Mammary epithelial cell (primary cell): ENCODE measurements at regions of chr16 and their contacts with region 1.

Region 1: DNA sequence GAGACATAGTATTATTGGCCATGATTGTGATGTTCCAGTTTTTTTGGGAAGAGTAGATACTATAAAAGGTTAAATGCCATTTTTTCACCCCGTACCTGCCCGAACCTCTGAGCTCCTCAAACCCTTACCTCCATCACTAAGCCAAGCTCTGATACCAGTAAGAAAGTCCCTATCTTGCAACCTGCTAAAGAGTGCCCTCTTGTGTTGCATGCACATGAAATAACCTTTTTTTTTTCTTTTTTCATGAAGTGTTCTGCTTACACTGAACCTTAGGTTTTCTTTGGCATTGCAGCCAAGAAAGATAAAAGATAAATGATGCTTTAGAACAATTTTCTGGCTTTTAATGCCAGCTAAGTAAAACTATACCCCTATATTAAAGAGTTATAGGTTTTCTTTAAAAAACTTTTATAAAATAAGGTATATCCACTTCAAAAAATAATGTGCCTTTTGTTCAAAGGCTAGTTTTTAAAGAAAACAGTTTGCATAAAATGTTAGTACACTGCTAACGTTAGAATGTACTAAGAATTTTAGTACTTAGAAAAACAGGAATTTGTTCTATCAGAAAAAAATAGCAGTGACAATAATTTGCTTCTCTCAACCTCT is 295.3 kb upstream of the PMFBP1 start:
- DNase-seq: peak; percentile 41
- H3K4me3 ChIP-seq: no peak overlapping the region
- H3K27ac ChIP-seq: no peak overlapping the region
- H3K4me1 ChIP-seq: no peaks in the 10 kb centered on the region
- H3K27me3 ChIP-seq: no peaks in the 10 kb centered on the region
- CTCF ChIP-seq: peak; percentile 68 to 81

Region 2: GRCh38 chr16:72234387-72234786 is 232.9 kb before region 1 on chr16:
- CTCF ChIA-PET with region 1: no interaction called
- dilution Hi-C with region 1: no loop called
- in situ Hi-C with region 1: loop called in 1 of 2 experiments (anchors 5 kb)
- intact Hi-C with region 1: no loop called
- DNase-seq: no peak
- H3K4me3 ChIP-seq: no peak overlapping the region
- H3K27ac ChIP-seq: no peak overlapping the region
- H3K4me1 ChIP-seq: peaks cover 5% of the 10 kb centered on the region
- H3K27me3 ChIP-seq: no peaks in the 10 kb centered on the region
- CTCF ChIP-seq: no peak

Region 3: DNA sequence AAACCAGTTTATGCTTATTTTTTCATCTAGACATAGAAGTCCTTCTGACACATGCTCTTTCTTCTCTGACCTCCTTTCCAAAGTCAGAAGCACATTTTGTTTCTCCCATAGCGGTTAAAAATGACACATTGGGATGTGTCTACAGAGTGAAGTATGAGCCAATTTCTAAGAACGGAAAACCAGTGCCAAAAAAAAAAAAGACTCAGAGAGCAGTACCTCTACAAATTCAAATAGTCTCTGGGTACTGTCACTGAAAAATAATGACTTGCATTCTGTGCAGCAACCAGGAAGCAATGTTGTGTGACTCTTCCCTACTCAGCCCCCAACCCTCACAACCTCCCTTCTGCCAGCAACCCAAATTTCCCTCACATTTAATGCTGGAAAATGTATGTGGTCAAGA is 149.8 kb before region 1 on chr16:
- CTCF ChIA-PET with region 1: no interaction called
- dilution Hi-C with region 1: no loop called
- in situ Hi-C with region 1: no loop called
- intact Hi-C with region 1: no loop called
- DNase-seq: no peak
- H3K4me3 ChIP-seq: no peak overlapping the region
- H3K27ac ChIP-seq: no peak overlapping the region
- H3K4me1 ChIP-seq: no peaks in the 10 kb centered on the region
- H3K27me3 ChIP-seq: no peaks in the 10 kb centered on the region
- CTCF ChIP-seq: no peak

Region 4: GRCh38 chr16:72400257-72400882 is 66.9 kb before region 1 on chr16:
- CTCF ChIA-PET with region 1: interaction called, 5 read pairs
- dilution Hi-C with region 1: no loop called
- in situ Hi-C with region 1: no loop called
- intact Hi-C with region 1: loop called (anchors 2 kb)
- DNase-seq: peak; percentile 28
- H3K4me3 ChIP-seq: no peak overlapping the region
- H3K27ac ChIP-seq: no peak overlapping the region
- H3K4me1 ChIP-seq: no peaks in the 10 kb centered on the region
- H3K27me3 ChIP-seq: no peaks in the 10 kb centered on the region
- CTCF ChIP-seq: peak; percentile 68 to 74

Region 5: DNA sequence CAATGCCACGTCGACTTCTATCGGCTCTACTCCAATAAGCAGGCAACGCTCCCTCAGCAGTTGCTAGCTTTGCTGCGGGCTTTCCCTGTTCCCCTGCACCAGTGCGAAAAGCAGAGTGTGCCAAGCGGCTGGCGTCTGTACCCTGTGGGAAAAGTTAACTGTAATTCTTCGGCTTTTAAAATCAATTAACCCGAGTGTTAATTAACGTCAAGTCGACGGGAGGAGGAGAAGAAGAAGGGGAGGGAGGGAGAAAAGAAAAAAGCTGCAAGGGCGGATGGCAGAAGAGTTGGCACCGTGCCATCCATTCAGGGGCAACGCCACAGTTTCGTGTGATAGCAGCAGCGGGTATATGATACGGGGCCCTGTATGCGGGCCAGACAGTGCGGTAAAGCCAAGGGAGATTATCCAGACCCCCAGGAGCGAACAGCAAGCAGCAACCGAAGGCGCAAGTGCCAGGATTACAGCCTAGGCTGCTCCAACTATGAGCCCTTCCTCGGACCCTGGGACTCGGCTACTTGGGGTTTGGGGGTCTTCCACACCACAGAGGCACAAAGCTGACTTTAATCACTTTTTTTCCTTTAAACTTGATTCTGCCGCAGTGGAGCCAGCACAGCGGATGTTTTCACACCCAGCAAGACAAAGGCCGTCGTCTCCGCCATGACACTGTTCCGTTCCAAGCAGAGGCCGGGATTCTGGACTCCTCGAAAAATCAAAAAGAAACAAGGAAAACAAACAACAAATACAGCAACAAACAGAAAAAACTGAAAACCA is 41.5 kb before region 1 on chr16:
- CTCF ChIA-PET with region 1: no interaction called
- dilution Hi-C with region 1: no loop called
- in situ Hi-C with region 1: no loop called
- intact Hi-C with region 1: no loop called
- DNase-seq: no peak
- H3K4me3 ChIP-seq: no peak overlapping the region
- H3K27ac ChIP-seq: no peak overlapping the region
- H3K4me1 ChIP-seq: no peaks in the 10 kb centered on the region
- H3K27me3 ChIP-seq: no peaks in the 10 kb centered on the region
- CTCF ChIP-seq: no peak